Mammary epithelial cell (primary cell): ENCODE measurements at regions of chr5 and their contacts with region 1.

Region 1: DNA sequence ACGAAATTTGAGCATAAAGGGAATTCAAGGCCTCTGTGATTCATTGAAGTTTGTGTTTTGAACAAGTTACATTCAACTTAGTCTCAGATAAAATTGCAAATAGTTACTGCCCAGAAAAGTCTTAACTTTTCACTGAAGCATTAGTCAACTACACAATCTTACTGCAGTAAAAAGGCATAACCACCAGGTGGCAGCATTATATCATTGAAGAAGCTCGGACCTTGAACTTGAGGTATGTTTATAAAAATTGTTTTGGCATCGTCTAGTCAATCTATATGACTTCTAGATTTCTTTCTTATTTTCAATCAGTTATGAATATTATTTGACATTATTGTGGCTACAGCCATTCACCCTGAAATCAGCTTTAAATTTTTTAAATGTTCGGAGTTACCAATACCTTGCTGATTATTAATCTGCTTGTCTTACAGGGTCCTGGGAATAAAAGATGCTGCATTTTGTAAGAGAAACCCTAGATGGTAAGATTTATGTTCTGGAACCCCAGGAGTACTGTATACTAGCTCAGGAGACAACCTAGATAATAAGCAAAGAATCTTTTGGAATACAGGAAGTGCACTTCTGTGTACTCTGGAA is 83.9 kb upstream of the GRAMD2B start:
- DNase-seq: peak; percentile 57
- H3K4me3 ChIP-seq: no peak overlapping the region
- H3K27ac ChIP-seq: no peak overlapping the region
- H3K4me1 ChIP-seq: peaks cover 19% of the 10 kb centered on the region
- H3K27me3 ChIP-seq: no peaks in the 10 kb centered on the region
- CTCF ChIP-seq: peak; percentile 72 to 79

Region 2: DNA sequence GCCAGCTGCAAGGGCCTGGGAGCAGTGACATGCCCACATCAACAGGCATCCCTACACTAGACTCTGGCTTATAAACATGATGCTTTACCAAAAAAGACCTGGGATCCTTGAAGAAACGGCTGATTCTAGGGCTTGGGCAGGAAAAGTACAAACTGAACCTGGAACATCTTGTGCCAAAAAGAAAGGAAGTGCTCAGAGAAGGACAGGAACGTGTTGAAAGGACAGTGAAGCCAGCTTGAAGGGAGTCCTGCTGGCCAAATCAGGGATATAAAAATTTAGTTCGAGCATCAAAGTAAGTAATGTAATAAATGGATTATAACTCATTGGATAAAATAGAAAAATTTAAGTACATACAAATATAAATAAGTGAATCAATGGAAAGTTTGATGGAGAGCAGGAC is 197.6 kb after region 1 on chr5:
- CTCF ChIA-PET with region 1: interaction called, 3 read pairs
- dilution Hi-C with region 1: no loop called
- in situ Hi-C with region 1: loop called in 1 of 2 experiments (anchors 5 kb)
- intact Hi-C with region 1: loop called (anchors 1 kb)
- DNase-seq: no peak
- H3K4me3 ChIP-seq: no peak overlapping the region
- H3K27ac ChIP-seq: no peak overlapping the region
- H3K4me1 ChIP-seq: peaks cover 14% of the 10 kb centered on the region
- H3K27me3 ChIP-seq: no peaks in the 10 kb centered on the region
- CTCF ChIP-seq: peak; percentile 11 to 18

Region 3: GRCh38 chr5:126594676-126595485 is 255.6 kb after region 1 on chr5 and contains the start of gene ALDH7A1:
- CTCF ChIA-PET with region 1: no interaction called
- dilution Hi-C with region 1: no loop called
- in situ Hi-C with region 1: no loop called
- intact Hi-C with region 1: loop called (anchors 2 kb)
- DNase-seq: peak; percentile 76
- H3K4me3 ChIP-seq: peak within 1 kb of the TSS; percentile 67 to 78 (median 74)
- H3K27ac ChIP-seq: peak within 1 kb of the TSS; percentile 74
- H3K4me1 ChIP-seq: peaks cover 31% of the 10 kb centered on the region
- H3K27me3 ChIP-seq: no peaks in the 10 kb centered on the region
- CTCF ChIP-seq: peak; percentile 28 to 59
- total RNA-seq, gene ALDH7A1: 48.2 to 137 TPM

Region 4: DNA sequence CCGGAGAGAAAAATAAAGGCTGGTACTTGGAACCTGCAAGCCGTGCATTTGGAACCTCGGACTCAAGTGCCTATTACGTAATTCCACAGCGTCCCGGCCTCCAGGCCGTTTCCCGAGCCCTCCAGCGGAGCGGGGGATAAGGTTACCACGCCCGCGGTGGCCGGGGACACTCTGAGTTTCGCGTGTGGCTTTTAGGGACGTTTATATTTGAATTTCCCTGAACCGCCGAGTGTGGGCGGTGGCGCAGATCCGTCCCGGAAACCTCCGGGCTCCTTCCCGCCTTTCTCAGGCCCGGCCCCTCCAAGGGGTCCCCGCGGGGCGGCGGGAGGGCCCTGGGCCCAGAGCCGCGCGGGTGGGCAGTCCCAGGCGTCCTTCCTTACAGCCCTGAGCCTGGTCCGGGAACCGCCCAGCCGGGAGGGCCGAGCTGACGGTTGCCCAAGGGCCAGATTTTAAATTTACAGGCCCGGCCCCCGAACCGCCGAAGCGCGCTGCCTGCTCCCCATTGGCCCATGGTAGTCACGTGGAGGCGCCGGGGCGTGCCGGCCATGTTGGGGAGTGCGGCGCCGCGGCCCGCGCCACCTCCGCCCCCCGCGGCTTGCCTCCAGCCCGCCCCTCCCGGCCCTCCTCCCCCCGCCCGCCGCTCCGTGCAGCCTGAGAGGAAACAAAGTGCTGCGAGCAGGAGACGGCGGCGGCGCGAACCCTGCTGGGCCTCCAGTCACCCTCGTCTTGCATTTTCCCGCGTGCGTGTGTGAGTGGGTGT is 437.4 kb after region 1 on chr5 and contains the start of gene LMNB1:
- CTCF ChIA-PET with region 1: no interaction called
- dilution Hi-C with region 1: no loop called
- in situ Hi-C with region 1: loop called (anchors 25 kb)
- intact Hi-C with region 1: loop called (anchors 2 kb)
- DNase-seq: peak; percentile 93
- H3K4me3 ChIP-seq: peak within 1 kb of the TSS; percentile 88 to 97 (median 91)
- H3K27ac ChIP-seq: peak within 1 kb of the TSS; percentile 80
- H3K4me1 ChIP-seq: peaks cover 17% of the 10 kb centered on the region
- H3K27me3 ChIP-seq: no peaks in the 10 kb centered on the region
- CTCF ChIP-seq: peak in 1 of 2 donors; percentile 11
- total RNA-seq, gene LMNB1: 5.2 to 36.3 TPM